Heart left ventricle (tissue), 16 donors: ENCODE measurements at regions of chr4 and their contacts with region 1.

Region 1: GRCh38 chr4:54384563-54384962 is 155.5 kb downstream of the PDGFRA start:
- DNase-seq: peak in 1 of 5 donors; percentile 17
- ATAC-seq: peak in 2 of 4 donors; percentile 45 to 64
- H3K4me3 ChIP-seq: no peak overlapping the region
- H3K27ac ChIP-seq: no peak overlapping the region
- H3K4me1 ChIP-seq: no peaks in the 10 kb centered on the region
- H3K27me3 ChIP-seq: no peaks in the 10 kb centered on the region
- CTCF ChIP-seq: peak in 11 of 12 donors; percentile 9 to 60 (median 40)
- POLR2A ChIP-seq: no peak

Region 2: DNA sequence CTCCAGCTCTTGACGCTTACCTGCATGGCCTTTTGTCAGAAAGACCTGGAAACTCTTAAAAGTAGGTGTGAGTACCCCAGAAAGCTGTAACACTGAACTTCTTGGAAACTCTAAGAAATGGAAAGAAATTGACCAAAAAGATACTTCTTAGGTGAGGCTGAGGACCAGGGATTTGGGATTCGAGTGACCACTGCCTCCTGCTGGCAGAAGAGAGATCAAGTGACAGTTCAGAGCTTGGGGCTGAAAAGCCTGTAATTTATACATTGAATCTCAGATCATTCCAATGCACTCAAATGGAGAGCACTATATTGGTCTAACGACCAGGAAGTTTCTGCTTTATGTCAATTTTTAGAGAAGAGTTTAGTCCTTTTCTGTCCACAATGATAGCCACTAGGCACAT is 49.1 kb after region 1 on chr4:
- intact Hi-C with region 1: loop called in 4 of 10 experiments (anchors 5 to 10 kb)
- DNase-seq: no peak
- ATAC-seq: no peak
- H3K4me3 ChIP-seq: no peak overlapping the region
- H3K27ac ChIP-seq: no peak overlapping the region
- H3K4me1 ChIP-seq: no peaks in the 10 kb centered on the region
- H3K27me3 ChIP-seq: no peaks in the 10 kb centered on the region
- CTCF ChIP-seq: peak; percentile 13 to 56 (median 36)
- POLR2A ChIP-seq: no peak

Region 3: GRCh38 chr4:54440394-54441136 is 56.0 kb after region 1 on chr4:
- intact Hi-C with region 1: loop called in 3 of 10 experiments (anchors 5 to 10 kb)
- DNase-seq: no peak
- ATAC-seq: peak in 1 of 4 donors; percentile 57
- H3K4me3 ChIP-seq: peak overlapping the region in 9 of 12 donors; percentile 4 to 48 (median 27)
- H3K27ac ChIP-seq: peak overlapping the region in 9 of 12 donors; percentile 2 to 54 (median 33)
- H3K4me1 ChIP-seq: peaks cover 0 to 7% (median 0%) of the 10 kb centered on the region in 12 donors
- H3K27me3 ChIP-seq: no peaks in the 10 kb centered on the region
- CTCF ChIP-seq: peak; percentile 43 to 75 (median 66)
- POLR2A ChIP-seq: no peak